ENCODE measurements at regions of chr4 and their contacts with region 1.

Region 1: DNA sequence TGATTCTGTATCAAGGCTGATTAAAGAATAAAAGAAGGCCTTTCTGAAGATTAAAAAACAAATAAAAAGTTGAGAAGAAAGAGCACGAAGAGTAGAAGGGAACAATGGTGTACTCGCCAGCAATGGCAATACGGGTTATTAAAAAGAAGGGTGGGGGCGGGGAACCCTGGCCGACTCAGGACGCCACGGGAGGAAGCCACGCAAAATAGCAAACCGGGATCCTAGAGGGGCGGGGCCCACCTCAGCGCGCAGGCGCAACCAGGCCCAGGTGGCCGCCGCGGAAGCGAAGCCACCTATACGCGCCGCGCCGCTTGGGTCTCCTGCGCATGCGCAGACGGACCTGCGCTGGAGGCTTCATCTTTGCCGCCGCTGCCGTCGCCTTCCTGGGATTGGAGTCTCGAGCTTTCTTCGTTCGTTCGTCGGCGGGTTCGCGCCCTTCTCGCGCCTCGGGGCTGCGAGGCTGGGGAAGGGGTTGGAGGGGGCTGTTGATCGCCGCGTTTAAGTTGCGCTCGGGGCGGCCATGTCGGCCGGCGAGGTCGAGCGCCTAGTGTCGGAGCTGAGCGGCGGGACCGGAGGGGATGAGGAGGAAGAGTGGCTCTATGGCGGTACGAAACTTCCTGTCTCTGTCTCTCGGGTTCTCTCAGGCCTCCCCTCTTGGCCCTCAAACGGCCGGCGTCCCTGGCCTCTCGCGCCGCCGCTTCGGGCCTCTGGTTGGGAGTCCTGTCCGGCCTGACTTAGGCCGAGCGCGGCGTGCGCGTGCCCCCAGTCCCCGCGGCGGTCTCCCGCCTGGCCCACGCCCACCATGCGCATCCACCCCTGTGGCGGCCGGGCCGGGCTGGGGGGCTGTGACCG is at the start of gene FIP1L1:
- DNase-seq: peak; percentile 78
- ATAC-seq: peak; percentile 92
- H3K4me3 ChIP-seq: peak within 1 kb of the TSS; percentile 89
- H3K27ac ChIP-seq: peak within 1 kb of the TSS; percentile 84
- H3K4me1 ChIP-seq: no peaks in the 10 kb centered on the region
- H3K27me3 ChIP-seq: no peaks in the 10 kb centered on the region
- CTCF ChIP-seq: no peak
- EP300 ChIP-seq: no peak
- POLR2A ChIP-seq: peak; percentile 92
- RAD21 ChIP-seq: no peak
- polyA plus RNA-seq, gene FIP1L1: 28.1 to 40.8 TPM

Region 2: GRCh38 chr4:53365486-53366300 is 11.9 kb before region 1 on chr4 and contains the start of gene SCFD2:
- CTCF ChIA-PET with region 1: interaction called, 11 read pairs
- POLR2A ChIA-PET with region 1: interaction called, 32 read pairs
- RAD21 ChIA-PET with region 1: interaction called, 4 read pairs
- SMC1A ChIA-PET with region 1: interaction called, 32 read pairs
- in situ Hi-C with region 1: no loop called
- intact Hi-C with region 1: no loop called
- DNase-seq: peak; percentile 91
- ATAC-seq: peak; percentile 94
- H3K4me3 ChIP-seq: peak within 1 kb of the TSS; percentile 95
- H3K27ac ChIP-seq: peak within 1 kb of the TSS; percentile 81
- H3K4me1 ChIP-seq: no peaks in the 10 kb centered on the region
- H3K27me3 ChIP-seq: no peaks in the 10 kb centered on the region
- CTCF ChIP-seq: no peak
- EP300 ChIP-seq: peak in 1 of 2 experiments; percentile 36; a peak in 1 of 4 replicates
- POLR2A ChIP-seq: peak; percentile 80
- RAD21 ChIP-seq: no peak
- polyA plus RNA-seq, gene SCFD2: 4.8 to 7.2 TPM

Measured in GM12878 (cell line).